ENCODE measurements at regions of chr1 and their contacts with region 1.

Region 1: GRCh38 chr1:50656931-50657330 is 233.7 kb upstream of the DMRTA2 start:
- DNase-seq: no peak
- H3K4me3 ChIP-seq: no peak overlapping the region
- H3K27ac ChIP-seq: no peak overlapping the region
- H3K4me1 ChIP-seq: no peaks in the 10 kb centered on the region
- H3K27me3 ChIP-seq: no peaks in the 10 kb centered on the region
- CTCF ChIP-seq: no peak

Region 2: GRCh38 chr1:50681931-50682330 is 25.0 kb after region 1 on chr1:
- CTCF ChIA-PET with region 1: interaction called, 11 read pairs
- dilution Hi-C with region 1: no loop called
- in situ Hi-C with region 1: no loop called
- intact Hi-C with region 1: no loop called
- DNase-seq: peak; percentile 21
- H3K4me3 ChIP-seq: no peak overlapping the region
- H3K27ac ChIP-seq: no peak overlapping the region
- H3K4me1 ChIP-seq: no peaks in the 10 kb centered on the region
- H3K27me3 ChIP-seq: no peaks in the 10 kb centered on the region
- CTCF ChIP-seq: no peak

Region 3: DNA sequence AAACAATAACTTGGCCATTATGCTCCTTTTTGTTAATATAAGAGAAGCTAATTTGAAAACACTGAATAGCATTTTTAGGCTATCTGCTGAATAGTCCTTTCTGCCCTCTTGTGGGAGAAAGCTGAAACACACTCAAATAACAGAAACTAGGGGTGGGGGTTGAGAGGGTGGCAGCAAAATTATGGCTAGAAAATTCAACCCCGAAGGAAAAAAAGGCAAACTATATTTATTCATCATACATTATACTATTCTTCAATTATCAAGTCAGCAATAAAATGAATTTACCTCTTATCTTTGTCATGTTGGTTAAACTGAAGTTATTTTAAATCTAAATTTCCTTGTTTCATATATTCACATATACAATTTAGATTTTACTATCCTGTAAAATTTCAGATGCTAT is 47.2 kb after region 1 on chr1:
- CTCF ChIA-PET with region 1: no interaction called
- dilution Hi-C with region 1: no loop called
- in situ Hi-C with region 1: no loop called
- intact Hi-C with region 1: no loop called
- DNase-seq: peak; percentile 26
- H3K4me3 ChIP-seq: no peak overlapping the region
- H3K27ac ChIP-seq: no peak overlapping the region
- H3K4me1 ChIP-seq: peaks cover 15% of the 10 kb centered on the region
- H3K27me3 ChIP-seq: no peaks in the 10 kb centered on the region
- CTCF ChIP-seq: peak; percentile 74 to 80

Measured in mammary epithelial cell (primary cell).